ENCODE measurements at regions of chr11 and their contacts with region 1.

Region 1: DNA sequence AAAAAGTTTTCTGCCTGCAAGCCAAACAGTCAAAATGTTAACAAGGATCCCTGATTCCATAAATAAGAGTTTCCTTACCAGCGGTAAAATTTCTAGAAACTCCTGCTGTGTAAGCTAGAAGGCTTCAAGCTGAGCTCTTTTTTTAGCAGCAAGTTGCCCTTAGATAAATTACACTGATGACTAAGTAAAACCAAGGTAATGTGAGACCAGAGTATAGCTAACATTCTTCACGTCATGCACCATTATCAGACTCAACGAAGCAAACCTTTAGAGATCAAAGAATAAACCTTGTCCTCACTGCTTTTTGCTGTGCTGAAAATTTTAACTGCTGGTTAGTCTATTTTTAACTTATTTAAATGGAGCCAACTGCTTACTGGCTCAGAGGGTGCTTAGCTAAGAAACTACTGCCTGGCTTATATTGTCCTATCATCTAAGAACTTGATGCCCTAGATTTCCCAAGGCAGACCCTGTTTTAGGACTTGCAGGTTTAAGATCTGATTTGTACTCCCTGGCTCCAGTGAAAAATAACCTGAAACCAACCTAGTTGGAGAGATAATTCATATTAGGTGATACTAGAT is 900.7 kb downstream of the JRKL start:
- DNase-seq: no peak
- ATAC-seq: no peak
- H3K4me3 ChIP-seq: no peak overlapping the region
- H3K27ac ChIP-seq: no peak overlapping the region
- H3K4me1 ChIP-seq: no peaks in the 10 kb centered on the region
- H3K27me3 ChIP-seq: no peaks in the 10 kb centered on the region
- CTCF ChIP-seq: no peak
- EP300 ChIP-seq: no peak
- POLR2A ChIP-seq: no peak
- RAD21 ChIP-seq: no peak

Region 2: DNA sequence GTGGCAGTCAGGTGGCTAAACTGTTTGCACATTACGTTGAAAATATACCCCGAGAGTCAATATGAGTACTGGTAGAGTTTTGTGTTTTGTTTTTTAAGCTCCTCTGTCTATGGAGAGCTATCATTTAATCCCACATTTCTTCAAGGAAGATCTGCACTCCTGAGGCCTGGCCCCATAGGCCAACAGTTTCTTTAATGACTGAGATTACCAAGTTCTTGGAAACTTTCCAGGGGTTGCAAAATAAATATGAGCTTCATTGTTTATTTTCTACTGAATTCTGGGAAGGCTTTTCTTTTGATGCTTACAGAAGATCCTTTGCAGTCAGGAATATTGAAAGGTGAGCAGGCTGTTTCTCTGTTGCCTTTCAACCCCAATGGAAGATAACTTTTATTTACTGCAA is 448.8 kb before region 1 on chr11:
- CTCF ChIA-PET with region 1: no interaction called
- POLR2A ChIA-PET with region 1: no interaction called
- RAD21 ChIA-PET with region 1: no interaction called
- SMC1A ChIA-PET with region 1: no interaction called
- in situ Hi-C with region 1: no loop called
- intact Hi-C with region 1: loop called (anchors 5 kb)
- DNase-seq: no peak
- ATAC-seq: no peak
- H3K4me3 ChIP-seq: no peak overlapping the region
- H3K27ac ChIP-seq: no peak overlapping the region
- H3K4me1 ChIP-seq: no peaks in the 10 kb centered on the region
- H3K27me3 ChIP-seq: no peaks in the 10 kb centered on the region; a peak in 1 of 4 replicates
- CTCF ChIP-seq: no peak
- EP300 ChIP-seq: no peak
- POLR2A ChIP-seq: no peak
- RAD21 ChIP-seq: no peak